ENCODE measurements at regions of chr2 and their contacts with region 1.

Region 1: DNA sequence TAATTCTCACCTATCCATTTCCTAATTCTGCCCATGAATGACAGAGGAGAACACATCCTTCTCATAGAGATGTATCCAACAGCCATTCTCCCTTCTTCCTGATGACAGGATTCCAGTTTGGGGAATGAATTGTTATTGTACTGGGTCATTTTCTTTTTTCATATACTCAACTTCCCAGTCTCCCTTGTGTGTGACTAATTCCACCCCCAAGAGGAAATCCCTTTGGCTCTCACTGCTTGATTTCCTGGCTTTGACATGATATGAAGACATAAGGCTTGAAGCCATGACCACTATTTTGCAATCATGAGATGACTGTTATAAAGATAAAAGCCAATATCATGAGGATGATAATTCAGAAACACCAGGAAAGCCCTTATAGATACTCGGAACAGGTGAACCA is 384.7 kb upstream of the ACVR2A start:
- DNase-seq: peak; percentile 31
- ATAC-seq: no peak
- H3K4me3 ChIP-seq: no peak overlapping the region
- H3K27ac ChIP-seq: no peak overlapping the region
- H3K4me1 ChIP-seq: no peaks in the 10 kb centered on the region
- H3K27me3 ChIP-seq: no peaks in the 10 kb centered on the region
- CTCF ChIP-seq: no peak

Region 2: GRCh38 chr2:147416099-147416498 is 44.1 kb before region 1 on chr2:
- CTCF ChIA-PET with region 1: no interaction called
- POLR2A ChIA-PET with region 1: no interaction called
- intact Hi-C with region 1: no loop called
- DNase-seq: peak; percentile 89
- ATAC-seq: peak; percentile 99
- H3K4me3 ChIP-seq: peak overlapping the region; percentile 20; the same call in 1 of the 2 replicates
- H3K27ac ChIP-seq: peak overlapping the region; percentile 10; the same call in 1 of the 2 replicates
- H3K4me1 ChIP-seq: peaks cover 27% of the 10 kb centered on the region
- H3K27me3 ChIP-seq: no peaks in the 10 kb centered on the region
- CTCF ChIP-seq: no peak

Region 3: GRCh38 chr2:149441255-149441654 is 1981.1 kb after region 1 on chr2:
- CTCF ChIA-PET with region 1: no interaction called
- POLR2A ChIA-PET with region 1: interaction called, 16 read pairs
- intact Hi-C with region 1: no loop called
- DNase-seq: no peak
- ATAC-seq: no peak
- H3K4me3 ChIP-seq: no peak overlapping the region
- H3K27ac ChIP-seq: no peak overlapping the region
- H3K4me1 ChIP-seq: no peaks in the 10 kb centered on the region
- H3K27me3 ChIP-seq: no peaks in the 10 kb centered on the region
- CTCF ChIP-seq: no peak

Measured in PC-3 (cell line).